ENCODE measurements at regions of chr6 and their contacts with region 1.

Region 1: DNA sequence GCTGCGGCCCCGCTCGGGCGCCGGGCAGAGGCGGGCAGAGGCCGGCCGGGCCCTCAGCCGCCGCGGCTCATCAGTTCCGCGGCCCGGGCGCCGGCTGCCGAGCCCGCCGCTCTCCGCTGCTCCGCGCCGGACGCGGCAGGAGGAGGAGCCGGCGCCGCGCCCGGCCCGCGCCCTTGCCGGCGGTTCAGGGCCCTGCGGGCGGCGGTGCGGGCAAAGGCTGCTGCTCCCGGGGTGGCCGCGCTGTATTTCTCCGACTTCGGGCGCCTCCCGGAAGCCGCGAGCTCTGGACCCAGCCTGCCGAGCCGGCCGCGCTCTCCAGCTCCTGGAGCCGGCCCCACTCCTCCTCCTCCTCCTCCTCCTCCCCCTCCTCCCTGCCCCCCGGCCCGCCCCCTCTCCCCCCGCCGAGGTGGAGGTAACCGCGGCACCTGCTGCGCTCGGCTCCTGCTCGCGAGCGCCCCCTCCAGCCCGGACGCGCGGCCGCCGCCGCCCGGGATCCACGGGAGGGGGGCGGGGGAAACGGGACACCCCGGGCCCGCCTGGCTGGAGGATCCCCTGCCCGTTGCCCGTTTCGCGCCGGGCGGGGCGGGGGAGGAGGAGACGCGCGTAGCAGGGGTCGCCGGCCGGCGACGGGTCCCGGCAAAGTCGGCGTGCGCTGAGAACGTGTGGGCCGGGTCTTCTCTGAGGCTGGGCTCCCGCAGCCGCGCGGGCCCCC is at the start of gene SLC22A23:
- DNase-seq: no peak
- ATAC-seq: peak; percentile 72
- H3K4me3 ChIP-seq: peak within 1 kb of the TSS; percentile 65; the same call in 1 of the 2 replicates
- H3K27ac ChIP-seq: no peak within 1 kb of the TSS
- H3K4me1 ChIP-seq: no peaks in the 10 kb centered on the region
- H3K27me3 ChIP-seq: peaks cover 7 to 11% of the 10 kb centered on the region in 2 experiments; a peak in 3 of 4 replicates
- CTCF ChIP-seq: peak; percentile 37 to 65 (median 64); a peak in 5 of 6 replicates
- EP300 ChIP-seq: no peak
- POLR2A ChIP-seq: no peak
- RAD21 ChIP-seq: peak; percentile 50
- polyA plus RNA-seq, gene SLC22A23: 0.20 to 0.24 TPM

Region 2: DNA sequence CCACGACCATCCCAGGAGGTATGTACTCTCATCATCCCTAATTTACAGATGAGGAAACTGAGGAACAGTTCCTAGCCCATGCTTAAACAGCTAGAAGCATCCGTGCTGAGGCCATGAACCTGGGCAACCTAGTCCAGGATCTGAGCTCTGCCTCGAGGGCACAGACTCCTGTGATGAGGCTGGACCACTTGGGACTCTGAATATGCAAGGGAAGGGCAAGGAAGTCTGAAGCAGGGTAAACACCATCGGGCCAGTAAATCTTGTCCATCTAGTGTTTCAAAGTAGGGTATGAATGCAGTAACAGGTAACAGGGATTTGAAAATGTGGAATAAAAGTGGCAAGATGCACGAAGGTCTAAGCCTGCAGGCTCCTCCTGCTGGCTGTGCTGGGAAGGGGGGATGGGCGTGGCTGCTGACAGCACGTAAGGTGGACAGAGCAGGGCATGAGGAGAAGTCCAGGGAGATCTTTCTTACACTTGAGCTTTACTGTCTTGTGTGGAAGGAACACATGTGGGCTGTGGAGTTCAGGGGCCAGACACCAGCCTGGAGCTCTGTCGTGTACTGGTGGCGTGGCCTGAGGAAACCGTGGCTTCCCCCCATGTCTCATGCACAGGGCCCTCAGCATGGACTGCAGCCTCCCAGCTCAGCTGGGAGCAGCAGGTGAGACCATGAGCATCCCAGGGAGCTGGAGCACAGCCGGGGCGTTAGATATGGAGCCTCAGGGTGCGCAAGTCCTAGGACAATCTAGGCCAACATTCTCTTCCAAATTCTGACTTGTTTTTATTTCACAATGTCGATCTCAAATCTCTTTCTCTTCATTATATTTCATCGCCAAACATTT is 84.7 kb before region 1 on chr6:
- CTCF ChIA-PET with region 1: interaction called, 3 read pairs
- POLR2A ChIA-PET with region 1: no interaction called
- RAD21 ChIA-PET with region 1: no interaction called
- SMC1A ChIA-PET with region 1: interaction called, 11 read pairs
- in situ Hi-C with region 1: no loop called
- intact Hi-C with region 1: no loop called
- DNase-seq: no peak
- ATAC-seq: no peak
- H3K4me3 ChIP-seq: no peak overlapping the region
- H3K27ac ChIP-seq: no peak overlapping the region
- H3K4me1 ChIP-seq: peaks cover 6% of the 10 kb centered on the region; the same call in 1 of the 2 replicates
- H3K27me3 ChIP-seq: no peaks in the 10 kb centered on the region
- CTCF ChIP-seq: peak in 2 of 3 experiments; percentile 3 to 9; a peak in 1 of 6 replicates
- EP300 ChIP-seq: no peak
- POLR2A ChIP-seq: no peak
- RAD21 ChIP-seq: no peak

Region 3: DNA sequence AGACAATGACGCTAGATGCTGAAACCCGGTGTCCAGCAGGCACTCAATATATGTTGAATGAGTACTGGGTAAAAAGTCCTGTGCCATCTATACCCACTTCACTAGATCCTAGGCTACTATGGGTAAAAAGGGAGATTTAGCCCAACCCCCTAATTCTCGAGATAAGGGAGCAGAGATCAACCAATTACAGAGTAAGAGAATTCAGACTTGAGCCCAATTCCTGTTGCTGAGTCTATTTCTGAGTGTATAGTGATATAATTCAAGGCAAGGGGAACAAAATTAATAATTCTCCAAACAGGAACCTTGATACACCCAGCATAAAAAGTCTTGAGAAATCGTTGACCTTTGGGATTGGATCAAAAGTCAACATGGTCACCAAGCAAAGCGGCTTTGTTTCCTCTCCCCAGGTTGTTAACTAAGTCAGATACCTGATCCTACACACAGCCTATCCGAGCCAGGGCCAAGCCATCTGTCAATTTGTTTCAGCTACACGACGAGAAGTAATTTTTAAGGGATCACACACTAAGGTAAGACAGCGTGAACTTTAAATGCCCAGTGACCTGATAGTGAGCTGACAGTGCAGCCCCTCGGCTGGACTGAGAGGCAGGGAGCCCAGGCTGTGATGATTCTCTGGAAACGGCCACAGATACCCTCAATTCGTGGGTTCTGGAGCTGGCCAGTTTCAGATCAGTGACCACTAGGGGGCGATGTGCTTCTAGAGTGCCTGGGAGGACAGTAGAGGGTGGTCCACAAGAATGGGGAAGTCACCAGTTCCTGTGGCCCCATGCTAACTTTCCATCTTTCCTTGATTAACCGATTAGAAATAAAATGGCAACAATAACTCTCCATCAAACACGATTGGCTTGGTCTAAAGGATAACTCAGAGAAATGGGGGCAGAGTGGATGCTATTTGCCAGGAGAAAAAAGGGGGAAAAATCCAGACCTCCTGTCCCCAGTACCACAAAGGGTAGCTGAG is 46.2 kb before region 1 on chr6:
- CTCF ChIA-PET with region 1: interaction called, 55 read pairs
- POLR2A ChIA-PET with region 1: interaction called, 3 read pairs
- RAD21 ChIA-PET with region 1: interaction called, 18 read pairs
- SMC1A ChIA-PET with region 1: interaction called, 46 read pairs
- in situ Hi-C with region 1: no loop called
- intact Hi-C with region 1: loop called (anchors 2 kb)
- DNase-seq: no peak
- ATAC-seq: peak; percentile 93
- H3K4me3 ChIP-seq: no peak overlapping the region
- H3K27ac ChIP-seq: no peak overlapping the region
- H3K4me1 ChIP-seq: peaks cover 9% of the 10 kb centered on the region
- H3K27me3 ChIP-seq: no peaks in the 10 kb centered on the region
- CTCF ChIP-seq: peak; percentile 55 to 75 (median 73)
- EP300 ChIP-seq: no peak
- POLR2A ChIP-seq: no peak
- RAD21 ChIP-seq: peak; percentile 68

Region 4: DNA sequence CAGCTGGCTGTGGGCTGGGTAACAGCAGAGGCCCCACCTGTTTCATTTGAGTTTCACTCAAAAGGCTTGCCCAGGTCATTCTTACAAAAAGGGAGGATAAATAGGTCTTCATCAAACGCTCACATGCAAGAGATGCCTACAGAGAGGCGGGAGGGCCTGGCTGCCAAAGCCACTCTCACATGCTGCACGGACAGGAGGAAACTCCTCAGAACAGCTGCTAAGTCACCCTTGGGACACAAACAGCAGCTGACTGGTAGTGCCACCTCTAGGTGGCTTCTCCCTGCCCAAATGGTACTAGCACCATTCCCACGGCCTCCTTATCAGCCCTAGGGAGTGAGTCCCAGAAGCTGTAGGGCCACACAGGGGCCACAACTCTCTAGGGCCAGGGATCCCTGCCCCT is 23.9 kb before region 1 on chr6:
- CTCF ChIA-PET with region 1: interaction called, 11 read pairs
- POLR2A ChIA-PET with region 1: no interaction called
- RAD21 ChIA-PET with region 1: interaction called, 6 read pairs
- SMC1A ChIA-PET with region 1: interaction called, 34 read pairs
- in situ Hi-C with region 1: no loop called
- intact Hi-C with region 1: no loop called
- DNase-seq: no peak
- ATAC-seq: peak; percentile 56
- H3K4me3 ChIP-seq: no peak overlapping the region
- H3K27ac ChIP-seq: no peak overlapping the region
- H3K4me1 ChIP-seq: peaks cover 8% of the 10 kb centered on the region
- H3K27me3 ChIP-seq: no peaks in the 10 kb centered on the region
- CTCF ChIP-seq: peak; percentile 10 to 27 (median 18); a peak in 3 of 6 replicates
- EP300 ChIP-seq: no peak
- POLR2A ChIP-seq: no peak
- RAD21 ChIP-seq: no peak